Heart left ventricle (tissue), 16 donors: ENCODE measurements at regions of chr16 and their contacts with region 1.

Region 1: GRCh38 chr16:11833951-11834695 is 17.2 kb downstream of the RSL1D1 start:
- DNase-seq: no peak
- ATAC-seq: no peak
- H3K4me3 ChIP-seq: no peak overlapping the region
- H3K27ac ChIP-seq: no peak overlapping the region
- H3K4me1 ChIP-seq: peaks cover 0 to 13% (median 0%) of the 10 kb centered on the region in 12 donors
- H3K27me3 ChIP-seq: no peaks in the 10 kb centered on the region
- CTCF ChIP-seq: no peak
- POLR2A ChIP-seq: no peak

Region 2: GRCh38 chr16:11727796-11728543 is 106.2 kb before region 1 on chr16:
- intact Hi-C with region 1: no loop called
- DNase-seq: no peak
- ATAC-seq: peak in 2 of 4 donors; percentile 13 to 15
- H3K4me3 ChIP-seq: no peak overlapping the region
- H3K27ac ChIP-seq: peak overlapping the region in 1 of 12 donors; percentile 12
- H3K4me1 ChIP-seq: peaks cover 0 to 40% (median 9%) of the 10 kb centered on the region in 12 donors
- H3K27me3 ChIP-seq: no peaks in the 10 kb centered on the region
- CTCF ChIP-seq: no peak
- POLR2A ChIP-seq: no peak

Region 3: GRCh38 chr16:11768849-11769248 is 65.3 kb before region 1 on chr16:
- intact Hi-C with region 1: loop called in 1 of 10 experiments (anchors 10 kb)
- DNase-seq: no peak
- ATAC-seq: no peak
- H3K4me3 ChIP-seq: no peak overlapping the region
- H3K27ac ChIP-seq: peak overlapping the region in 1 of 12 donors; percentile 53
- H3K4me1 ChIP-seq: peaks cover 0 to 10% (median 0%) of the 10 kb centered on the region in 12 donors
- H3K27me3 ChIP-seq: no peaks in the 10 kb centered on the region
- CTCF ChIP-seq: no peak
- POLR2A ChIP-seq: no peak

Region 4: DNA sequence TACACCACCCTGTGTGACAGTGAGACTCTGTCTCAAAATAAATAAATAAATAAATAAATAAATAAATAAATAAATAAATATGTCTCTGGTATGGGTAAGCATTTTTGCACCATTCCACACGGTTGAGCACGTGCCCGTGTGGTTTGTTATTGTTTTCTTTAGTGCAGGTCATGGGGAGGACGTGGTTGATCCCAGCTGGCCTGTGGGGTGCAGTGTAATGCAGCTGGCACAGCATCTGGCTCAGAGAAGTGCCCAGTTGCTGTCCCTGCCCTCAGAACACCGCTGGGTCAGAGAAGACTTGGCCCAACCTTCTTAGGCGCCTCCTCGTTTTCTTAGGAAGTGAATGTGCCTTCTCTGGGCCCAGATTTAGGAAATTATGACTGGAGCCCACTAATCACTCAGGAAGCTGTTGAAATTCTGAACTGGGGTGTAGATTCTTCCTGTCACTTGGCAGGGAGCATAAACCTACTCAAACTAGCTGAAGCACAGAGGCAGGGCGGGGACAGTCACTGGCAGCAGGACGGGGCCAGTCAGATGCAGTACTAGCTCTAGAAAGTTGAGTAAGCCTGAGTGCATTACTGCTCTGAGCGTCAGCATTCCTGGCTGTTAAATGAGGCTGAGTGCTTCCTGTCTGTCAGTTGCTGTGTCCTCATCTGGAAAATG is 228.4 kb after region 1 on chr16:
- intact Hi-C with region 1: no loop called
- DNase-seq: peak; percentile 60 to 84 (median 71)
- ATAC-seq: peak; percentile 74 to 97 (median 91)
- H3K4me3 ChIP-seq: no peak overlapping the region
- H3K27ac ChIP-seq: peak overlapping the region in 11 of 12 donors; percentile 30 to 76 (median 58)
- H3K4me1 ChIP-seq: peaks cover 0 to 30% (median 14%) of the 10 kb centered on the region in 12 donors
- H3K27me3 ChIP-seq: no peaks in the 10 kb centered on the region
- CTCF ChIP-seq: no peak
- POLR2A ChIP-seq: no peak